CD4-positive, alpha-beta T cell (primary cell): ENCODE measurements at regions of chr11 and their contacts with region 1.

Region 1: DNA sequence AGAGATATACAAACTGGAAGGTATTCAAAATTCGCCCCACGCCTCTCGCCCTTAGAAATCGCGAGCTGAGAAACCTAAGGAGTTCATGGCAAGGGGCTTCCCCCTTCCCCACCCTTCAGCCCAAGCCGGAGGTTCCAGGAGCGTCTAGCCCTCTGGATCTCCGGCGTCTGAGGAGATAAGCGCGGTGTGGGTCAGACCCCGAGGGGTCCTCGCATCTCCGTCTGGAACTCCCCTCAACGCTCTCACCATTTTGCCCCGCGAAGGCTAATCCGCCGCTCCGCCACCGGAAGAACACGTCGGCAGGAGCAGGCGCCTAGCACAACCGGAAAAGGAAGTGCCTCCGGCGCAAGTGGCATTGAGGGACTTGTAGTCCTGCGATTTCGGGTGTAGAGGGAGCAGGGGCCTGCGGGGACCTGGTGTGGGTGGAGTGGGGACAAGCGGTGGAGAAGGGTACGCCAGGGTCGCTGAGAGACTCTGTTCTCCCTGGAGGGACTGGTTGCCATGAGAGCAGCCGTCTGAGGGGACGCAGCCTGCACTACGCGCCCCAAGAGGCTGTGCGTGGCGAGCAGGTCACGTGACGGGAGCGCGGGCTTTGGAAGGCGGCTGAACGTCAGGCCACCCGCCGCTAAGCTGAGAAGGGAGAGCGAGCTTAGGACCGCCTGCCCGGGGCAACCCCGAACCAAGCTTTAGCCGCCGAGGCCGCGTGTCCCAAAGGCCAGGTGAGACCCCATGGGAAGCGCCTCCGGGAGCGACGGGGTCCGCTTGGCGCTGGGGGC is at the starts of genes FEN1 and TMEM258:
- DNase-seq: peak; percentile 74 to 94 (median 80)
- ATAC-seq: peak; percentile 88
- H3K4me3 ChIP-seq: peak within 1 kb of the TSS; percentile 87
- H3K4me3 Mint-ChIP-seq: peak within 1 kb of the TSS; percentile 94
- H3K27ac ChIP-seq: peak within 1 kb of the TSS; percentile 93 to 97
- H3K27ac Mint-ChIP-seq: peak within 1 kb of the TSS; percentile 95
- H3K4me1 ChIP-seq: peaks cover 34% of the 10 kb centered on the region
- H3K4me1 Mint-ChIP-seq: peaks cover 44% of the 10 kb centered on the region
- H3K27me3 ChIP-seq: no peaks in the 10 kb centered on the region
- H3K27me3 Mint-ChIP-seq: no peaks in the 10 kb centered on the region
- CTCF ChIP-seq: no peak
- total RNA-seq, gene FEN1: 7.5 to 9.1 TPM
- total RNA-seq, gene TMEM258: 55.2 to 56.0 TPM

Region 2: DNA sequence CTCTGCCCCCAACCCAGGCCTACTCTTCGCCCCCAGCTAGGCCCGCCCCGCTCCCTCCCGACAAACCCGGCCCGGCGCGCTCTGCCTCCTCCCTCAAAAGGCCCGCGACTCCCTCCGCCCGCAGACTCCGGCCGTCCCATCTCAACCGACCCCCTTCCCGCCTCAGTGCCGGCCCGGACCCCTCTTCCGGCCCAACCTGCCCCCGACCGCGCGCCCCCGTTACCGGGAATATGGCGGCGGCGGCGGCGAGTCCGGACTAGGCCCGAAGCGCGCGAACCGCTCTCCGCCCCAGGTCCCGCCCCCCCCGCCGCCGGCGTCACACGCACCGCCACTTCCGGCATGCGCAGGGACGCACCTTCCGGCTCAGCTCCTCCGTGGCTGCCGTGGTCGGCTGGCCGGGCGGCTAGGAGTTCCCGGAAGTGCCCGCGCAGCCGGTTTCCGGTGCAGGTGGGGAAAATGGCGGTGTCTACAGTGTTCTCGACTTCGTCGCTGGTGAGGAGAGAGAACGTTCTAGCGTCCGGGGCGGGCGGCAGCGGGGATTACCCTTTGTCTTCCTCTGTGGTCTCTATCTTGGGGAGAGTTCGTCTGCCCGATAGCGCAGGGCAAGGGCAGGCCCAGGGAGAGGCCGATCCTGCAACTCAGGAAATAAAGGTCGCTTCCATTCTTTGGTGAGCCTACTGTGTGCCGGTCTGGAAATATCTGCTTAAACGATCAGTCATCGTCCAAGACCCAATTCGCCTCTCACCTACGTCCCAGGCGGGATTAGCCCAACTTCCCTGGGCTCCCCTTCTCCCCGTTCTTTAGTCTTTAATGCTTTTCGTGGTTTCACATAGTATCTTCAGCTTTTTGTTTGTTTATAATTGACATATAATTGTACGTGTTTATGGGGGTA is 362.6 kb before region 1 on chr11 and contains the starts of genes CPSF7 and SDHAF2:
- CTCF ChIA-PET with region 1: no interaction called
- POLR2A ChIA-PET with region 1: no interaction called
- intact Hi-C with region 1: loop called in 1 of 2 experiments (anchors 5 kb)
- DNase-seq: peak; percentile 94 to 99 (median 97)
- ATAC-seq: peak; percentile 81
- H3K4me3 ChIP-seq: peak within 1 kb of the TSS; percentile 93
- H3K4me3 Mint-ChIP-seq: peak within 1 kb of the TSS; percentile 92
- H3K27ac ChIP-seq: peak within 1 kb of the TSS; percentile 99
- H3K27ac Mint-ChIP-seq: peak within 1 kb of the TSS; percentile 99
- H3K4me1 ChIP-seq: peaks cover 41% of the 10 kb centered on the region
- H3K4me1 Mint-ChIP-seq: peaks cover 81% of the 10 kb centered on the region
- H3K27me3 ChIP-seq: no peaks in the 10 kb centered on the region
- H3K27me3 Mint-ChIP-seq: no peaks in the 10 kb centered on the region
- CTCF ChIP-seq: no peak
- total RNA-seq, gene CPSF7: 111 to 116 TPM
- total RNA-seq, gene SDHAF2: 28.7 to 33.0 TPM

Region 3: GRCh38 chr11:61602775-61603569 is 189.5 kb before region 1 on chr11:
- CTCF ChIA-PET with region 1: no interaction called
- POLR2A ChIA-PET with region 1: no interaction called
- intact Hi-C with region 1: no loop called
- DNase-seq: no peak
- ATAC-seq: no peak
- H3K4me3 ChIP-seq: no peak overlapping the region
- H3K4me3 Mint-ChIP-seq: no peak overlapping the region
- H3K27ac ChIP-seq: no peak overlapping the region
- H3K27ac Mint-ChIP-seq: no peak overlapping the region
- H3K4me1 ChIP-seq: no peaks in the 10 kb centered on the region
- H3K4me1 Mint-ChIP-seq: no peaks in the 10 kb centered on the region
- H3K27me3 ChIP-seq: no peaks in the 10 kb centered on the region
- H3K27me3 Mint-ChIP-seq: peaks cover 31% of the 10 kb centered on the region
- CTCF ChIP-seq: no peak

Region 4: GRCh38 chr11:61827571-61828378 is 35.3 kb after region 1 on chr11 and contains the start of gene FADS2:
- CTCF ChIA-PET with region 1: interaction called, 12 read pairs
- POLR2A ChIA-PET with region 1: no interaction called
- intact Hi-C with region 1: no loop called
- DNase-seq: peak in 13 of 14 experiments; percentile 23 to 88 (median 49)
- ATAC-seq: peak; percentile 80
- H3K4me3 ChIP-seq: peak within 1 kb of the TSS; percentile 64
- H3K4me3 Mint-ChIP-seq: peak within 1 kb of the TSS; percentile 85
- H3K27ac ChIP-seq: peak within 1 kb of the TSS in 1 of 2 donors; percentile 25
- H3K27ac Mint-ChIP-seq: no peak within 1 kb of the TSS
- H3K4me1 ChIP-seq: peaks cover 30% of the 10 kb centered on the region
- H3K4me1 Mint-ChIP-seq: peaks cover 14% of the 10 kb centered on the region
- H3K27me3 ChIP-seq: peaks cover 15 to 29% of the 10 kb centered on the region in 2 experiments
- H3K27me3 Mint-ChIP-seq: peaks cover 68% of the 10 kb centered on the region
- CTCF ChIP-seq: no peak
- total RNA-seq, gene FADS2: 0.08 to 0.33 TPM

Region 5: GRCh38 chr11:61899146-61899841 is 106.8 kb after region 1 on chr11:
- CTCF ChIA-PET with region 1: interaction called, 29 read pairs
- POLR2A ChIA-PET with region 1: interaction called, 3 read pairs
- intact Hi-C with region 1: loop called (anchors 2 to 5 kb)
- DNase-seq: peak; percentile 87 to 97 (median 93)
- ATAC-seq: peak; percentile 98
- H3K4me3 ChIP-seq: no peak overlapping the region
- H3K4me3 Mint-ChIP-seq: no peak overlapping the region
- H3K27ac ChIP-seq: no peak overlapping the region
- H3K27ac Mint-ChIP-seq: no peak overlapping the region
- H3K4me1 ChIP-seq: peaks cover 9% of the 10 kb centered on the region
- H3K4me1 Mint-ChIP-seq: peaks cover 6% of the 10 kb centered on the region
- H3K27me3 ChIP-seq: no peaks in the 10 kb centered on the region
- H3K27me3 Mint-ChIP-seq: no peaks in the 10 kb centered on the region
- CTCF ChIP-seq: peak; percentile 98

Region 6: DNA sequence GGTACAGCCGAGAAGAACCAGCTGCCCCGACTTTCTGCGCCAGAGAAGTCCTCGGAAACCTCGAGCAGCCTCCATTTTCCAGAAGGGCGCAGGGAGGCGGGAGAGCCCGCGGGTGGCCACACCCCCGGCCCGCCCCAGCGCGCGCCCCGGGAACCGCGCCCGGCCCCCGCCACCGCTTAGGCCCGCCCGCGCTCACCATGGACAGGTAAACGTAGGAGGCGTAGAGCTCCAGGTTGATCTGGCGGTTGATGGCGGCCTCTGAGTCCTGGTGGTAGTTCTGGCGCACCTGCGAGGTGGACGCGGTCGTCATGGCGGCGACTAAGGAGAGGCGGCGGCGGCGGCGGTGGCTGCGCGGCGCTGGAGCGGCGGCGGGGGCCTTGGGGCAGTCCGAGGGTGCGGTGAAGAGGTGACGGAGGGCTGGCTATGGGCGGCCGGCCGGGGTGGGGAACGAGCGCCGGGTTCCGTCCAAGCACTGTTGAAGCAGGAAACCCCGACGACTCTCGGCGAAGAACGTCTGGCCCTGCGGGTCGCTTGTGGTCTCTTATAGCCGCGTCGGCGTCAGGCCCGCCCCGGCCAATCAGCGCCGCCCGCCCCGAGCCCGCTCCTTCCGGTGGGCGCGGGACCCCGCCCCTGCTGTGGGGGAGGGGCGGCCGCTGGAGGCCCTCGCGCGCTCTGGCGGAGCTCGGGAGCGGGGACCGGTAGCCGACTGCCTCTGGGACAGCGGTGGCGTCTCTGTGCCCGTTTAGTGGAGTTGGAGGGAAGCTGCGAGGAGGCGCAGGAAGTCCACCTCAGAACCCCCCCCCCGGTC is 174.8 kb after region 1 on chr11 and contains the start of gene FTH1:
- CTCF ChIA-PET with region 1: no interaction called
- POLR2A ChIA-PET with region 1: interaction called, 11 read pairs
- intact Hi-C with region 1: loop called in 1 of 2 experiments (anchors 10 kb)
- DNase-seq: peak; percentile 83 to 96 (median 91)
- ATAC-seq: peak; percentile 71
- H3K4me3 ChIP-seq: peak within 1 kb of the TSS; percentile 98
- H3K4me3 Mint-ChIP-seq: peak within 1 kb of the TSS; percentile 99
- H3K27ac ChIP-seq: peak within 1 kb of the TSS; percentile 87 to 94
- H3K27ac Mint-ChIP-seq: peak within 1 kb of the TSS; percentile 84
- H3K4me1 ChIP-seq: peaks cover 61% of the 10 kb centered on the region
- H3K4me1 Mint-ChIP-seq: peaks cover 74% of the 10 kb centered on the region
- H3K27me3 ChIP-seq: no peaks in the 10 kb centered on the region
- H3K27me3 Mint-ChIP-seq: peaks cover 4% of the 10 kb centered on the region
- CTCF ChIP-seq: no peak
- total RNA-seq, gene FTH1: 2,313 to 2,400 TPM

Region 7: DNA sequence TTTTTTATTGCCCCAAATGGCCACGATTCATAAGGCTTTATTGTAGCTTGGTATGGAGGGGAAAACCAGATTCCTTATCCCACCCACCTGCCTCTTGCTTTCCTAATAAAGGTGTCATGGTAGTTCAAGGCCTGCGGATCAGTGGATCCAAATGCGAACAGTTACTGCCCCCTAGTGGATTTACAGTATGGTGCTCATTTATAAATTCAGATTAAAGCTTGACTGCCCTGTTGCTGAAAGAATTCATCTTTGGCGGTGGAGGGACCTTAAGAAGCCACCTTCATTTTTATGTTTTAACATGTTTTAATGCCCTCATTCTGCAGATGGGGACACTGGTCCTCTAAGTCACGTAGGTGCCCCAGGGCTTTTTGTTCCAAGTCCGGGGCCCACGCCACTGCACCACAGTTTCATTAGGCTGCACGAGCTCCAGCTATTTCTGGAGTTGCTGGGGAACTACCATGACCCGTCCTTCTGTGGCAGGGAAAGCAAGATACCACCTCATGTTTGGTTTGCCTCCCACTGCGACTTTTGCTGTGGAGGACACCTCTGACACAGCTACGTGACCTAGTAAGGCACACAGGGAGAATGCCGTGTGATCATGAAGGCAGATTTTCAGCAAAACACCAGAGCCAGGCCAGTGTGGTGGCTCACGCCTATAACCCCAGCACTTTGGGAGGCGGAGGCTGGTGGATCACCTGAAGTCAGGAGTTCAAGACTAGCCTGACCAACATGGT is 315.7 kb after region 1 on chr11:
- CTCF ChIA-PET with region 1: interaction called, 30 read pairs
- POLR2A ChIA-PET with region 1: interaction called, 6 read pairs
- intact Hi-C with region 1: loop called (anchors 1 kb)
- DNase-seq: peak in 8 of 14 experiments; percentile 19 to 82 (median 42)
- ATAC-seq: peak; percentile 62
- H3K4me3 ChIP-seq: no peak overlapping the region
- H3K4me3 Mint-ChIP-seq: peak overlapping the region; percentile 52
- H3K27ac ChIP-seq: no peak overlapping the region
- H3K27ac Mint-ChIP-seq: no peak overlapping the region
- H3K4me1 ChIP-seq: peaks cover 26% of the 10 kb centered on the region
- H3K4me1 Mint-ChIP-seq: peaks cover 11% of the 10 kb centered on the region
- H3K27me3 ChIP-seq: no peaks in the 10 kb centered on the region
- H3K27me3 Mint-ChIP-seq: no peaks in the 10 kb centered on the region
- CTCF ChIP-seq: peak; percentile 85

Region 8: GRCh38 chr11:62309991-62310390 is 517.5 kb after region 1 on chr11:
- CTCF ChIA-PET with region 1: no interaction called
- POLR2A ChIA-PET with region 1: no interaction called
- intact Hi-C with region 1: loop called in 1 of 2 experiments (anchors 5 kb)
- DNase-seq: peak in 1 of 14 experiments; percentile 21
- ATAC-seq: no peak
- H3K4me3 ChIP-seq: no peak overlapping the region
- H3K4me3 Mint-ChIP-seq: peak overlapping the region; percentile 13
- H3K27ac ChIP-seq: no peak overlapping the region
- H3K27ac Mint-ChIP-seq: no peak overlapping the region
- H3K4me1 ChIP-seq: peaks cover 14% of the 10 kb centered on the region
- H3K4me1 Mint-ChIP-seq: peaks cover 15% of the 10 kb centered on the region
- H3K27me3 ChIP-seq: peaks cover 5 to 20% of the 10 kb centered on the region in 2 experiments
- H3K27me3 Mint-ChIP-seq: peaks cover 65% of the 10 kb centered on the region
- CTCF ChIP-seq: no peak